ENCODE measurements at regions of chr21 and their contacts with region 1.

Region 1: GRCh38 chr21:42590431-42591131 is 62.8 kb upstream of the PDE9A start:
- DNase-seq: no peak
- ATAC-seq: no peak

Region 2: GRCh38 chr21:42496122-42496900 is 94.3 kb before region 1 on chr21 and contains the start of gene RSPH1:
- intact Hi-C with region 1: no loop called
- DNase-seq: peak; percentile 100
- ATAC-seq: peak; percentile 100
- total RNA-seq, gene RSPH1: not detected

Region 3: GRCh38 chr21:42641311-42642218 is 51.0 kb after region 1 on chr21:
- intact Hi-C with region 1: no loop called
- DNase-seq: peak; percentile 21
- ATAC-seq: peak; percentile 16

Region 4: GRCh38 chr21:42760951-42761680 is 170.5 kb after region 1 on chr21:
- intact Hi-C with region 1: no loop called
- DNase-seq: peak; percentile 41
- ATAC-seq: peak; percentile 74

Region 5: GRCh38 chr21:42818328-42818749 is 227.8 kb after region 1 on chr21:
- intact Hi-C with region 1: loop called (anchors 2 kb)
- DNase-seq: peak; percentile 76
- ATAC-seq: peak; percentile 79